CD8-positive, alpha-beta T cell (primary cell): ENCODE measurements at regions of chr16 and their contacts with region 1.

Region 1: DNA sequence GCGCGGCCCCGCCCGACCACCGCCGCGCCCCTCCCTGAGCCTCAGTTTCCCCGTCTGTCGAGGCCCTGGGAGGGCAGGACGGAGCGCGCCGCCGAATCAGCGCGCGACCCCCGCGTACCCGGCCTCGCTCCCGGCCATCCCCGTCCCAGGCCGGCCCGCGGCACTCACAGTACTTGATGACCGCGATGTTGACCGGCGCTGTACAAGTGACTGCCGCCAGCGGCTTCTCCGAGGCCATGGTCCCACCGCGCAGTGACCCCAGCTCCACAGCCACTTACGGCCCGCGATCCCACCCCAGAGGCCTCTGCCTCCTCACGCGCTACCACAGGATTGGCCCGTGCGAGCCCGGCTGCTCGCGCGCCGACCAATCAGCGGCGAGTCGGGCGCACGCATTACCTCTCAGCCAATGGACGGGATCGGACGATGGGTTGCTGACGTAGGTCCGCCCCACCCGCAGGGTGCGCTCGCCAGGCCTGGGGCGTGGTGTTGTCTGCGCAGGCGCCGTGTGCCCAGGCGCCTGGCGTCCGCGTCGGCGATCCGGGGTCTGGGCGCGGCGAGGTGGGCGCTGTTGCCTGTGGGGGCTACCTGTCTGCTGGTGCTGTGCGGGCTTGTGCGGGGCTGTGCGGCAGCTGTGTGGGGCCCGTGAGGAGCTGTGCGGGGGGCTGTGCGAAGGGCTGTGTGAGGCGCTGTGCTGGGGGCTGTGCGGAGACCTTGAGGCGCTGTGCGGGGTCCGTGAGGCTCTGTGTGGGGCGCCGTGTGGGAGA is at the start of gene MVD:
- DNase-seq: peak; percentile 88 to 99 (median 95)
- ATAC-seq: peak; percentile 96
- H3K4me3 ChIP-seq: peak within 1 kb of the TSS; percentile 81 to 85
- H3K4me3 Mint-ChIP-seq: peak within 1 kb of the TSS; percentile 94
- H3K27ac ChIP-seq: peak within 1 kb of the TSS; percentile 84 to 87
- H3K27ac Mint-ChIP-seq: peak within 1 kb of the TSS; percentile 95
- H3K4me1 ChIP-seq: peaks cover 15% of the 10 kb centered on the region
- H3K4me1 Mint-ChIP-seq: peaks cover 20% of the 10 kb centered on the region
- H3K27me3 ChIP-seq: no peaks in the 10 kb centered on the region
- H3K27me3 Mint-ChIP-seq: no peaks in the 10 kb centered on the region
- CTCF ChIP-seq: no peak
- total RNA-seq, gene MVD: 118 to 124 TPM

Region 2: GRCh38 chr16:88619859-88620815 is 42.9 kb before region 1 on chr16:
- CTCF ChIA-PET with region 1: interaction called, 3 read pairs
- POLR2A ChIA-PET with region 1: interaction called, 8 read pairs
- intact Hi-C with region 1: loop called in 1 of 2 experiments (anchors 1 kb)
- DNase-seq: peak; percentile 58 to 97 (median 76)
- ATAC-seq: peak; percentile 85
- H3K4me3 ChIP-seq: no peak overlapping the region
- H3K4me3 Mint-ChIP-seq: peak overlapping the region; percentile 36
- H3K27ac ChIP-seq: peak overlapping the region; percentile 69 to 89
- H3K27ac Mint-ChIP-seq: peak overlapping the region; percentile 99
- H3K4me1 ChIP-seq: peaks cover 28% of the 10 kb centered on the region
- H3K4me1 Mint-ChIP-seq: peaks cover 25% of the 10 kb centered on the region
- H3K27me3 ChIP-seq: no peaks in the 10 kb centered on the region
- H3K27me3 Mint-ChIP-seq: no peaks in the 10 kb centered on the region
- CTCF ChIP-seq: no peak

Region 3: GRCh38 chr16:88650749-88651275 is 12.2 kb before region 1 on chr16 and contains the start of gene CYBA:
- CTCF ChIA-PET with region 1: no interaction called
- POLR2A ChIA-PET with region 1: interaction called, 5 read pairs
- intact Hi-C with region 1: loop called in 1 of 2 experiments (anchors 1 kb)
- DNase-seq: peak; percentile 73 to 92 (median 82)
- ATAC-seq: peak; percentile 80
- H3K4me3 ChIP-seq: peak within 1 kb of the TSS; percentile 90 to 95
- H3K4me3 Mint-ChIP-seq: peak within 1 kb of the TSS; percentile 91
- H3K27ac ChIP-seq: peak within 1 kb of the TSS; percentile 91 to 94
- H3K27ac Mint-ChIP-seq: peak within 1 kb of the TSS; percentile 94
- H3K4me1 ChIP-seq: peaks cover 33% of the 10 kb centered on the region
- H3K4me1 Mint-ChIP-seq: peaks cover 21% of the 10 kb centered on the region
- H3K27me3 ChIP-seq: no peaks in the 10 kb centered on the region
- H3K27me3 Mint-ChIP-seq: no peaks in the 10 kb centered on the region
- CTCF ChIP-seq: no peak
- total RNA-seq, gene CYBA: 312 to 320 TPM

Region 4: DNA sequence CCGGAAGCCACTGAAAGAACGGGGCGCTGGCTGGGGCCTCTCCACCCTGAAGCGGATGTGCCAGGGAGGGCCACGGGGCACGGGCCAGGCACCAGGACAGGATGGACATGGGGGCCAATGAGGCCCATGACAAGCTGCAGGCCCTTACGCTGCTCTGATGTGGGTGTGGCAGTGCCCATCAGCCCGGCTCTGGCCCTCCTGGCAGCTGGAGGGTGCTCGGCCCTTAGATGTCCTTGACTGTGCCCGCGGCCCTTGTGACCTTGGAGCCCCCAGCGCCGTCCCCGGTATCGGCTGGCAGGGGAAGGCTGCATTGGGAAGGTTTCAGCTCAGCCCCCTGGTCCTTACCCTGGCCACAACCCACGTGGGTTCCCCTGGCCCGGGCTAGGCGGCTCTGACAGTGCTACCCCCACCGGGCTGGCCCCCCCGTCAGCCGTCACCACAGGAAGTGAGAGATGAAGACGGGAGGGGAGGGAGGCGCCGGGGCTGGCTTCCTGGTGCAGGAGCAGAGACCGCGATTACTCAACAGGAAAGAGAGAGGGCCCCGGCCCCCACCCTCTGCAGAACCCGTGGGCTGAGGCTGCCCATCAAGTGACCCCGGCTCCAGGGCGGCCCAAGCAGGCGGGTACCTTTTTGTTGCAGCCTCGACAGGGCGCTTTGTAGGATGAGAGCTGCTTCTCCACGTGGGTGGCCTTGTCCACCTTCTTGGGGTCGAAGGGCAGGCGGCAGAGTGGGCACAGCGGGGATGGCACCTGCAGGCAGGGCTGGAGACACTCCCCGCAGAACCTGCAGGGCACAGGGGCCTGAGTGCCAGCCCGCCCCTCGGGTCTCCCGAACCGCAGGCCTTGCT is 37.8 kb after region 1 on chr16:
- CTCF ChIA-PET with region 1: no interaction called
- POLR2A ChIA-PET with region 1: interaction called, 17 read pairs
- intact Hi-C with region 1: loop called (anchors 1 kb)
- DNase-seq: peak; percentile 92 to 98 (median 97)
- ATAC-seq: peak; percentile 65
- H3K4me3 ChIP-seq: peak overlapping the region; percentile 74 to 95
- H3K4me3 Mint-ChIP-seq: peak overlapping the region; percentile 90
- H3K27ac ChIP-seq: peak overlapping the region; percentile 83 to 91
- H3K27ac Mint-ChIP-seq: peak overlapping the region; percentile 98
- H3K4me1 ChIP-seq: peaks cover 56% of the 10 kb centered on the region
- H3K4me1 Mint-ChIP-seq: peaks cover 61% of the 10 kb centered on the region
- H3K27me3 ChIP-seq: no peaks in the 10 kb centered on the region
- H3K27me3 Mint-ChIP-seq: no peaks in the 10 kb centered on the region
- CTCF ChIP-seq: no peak

Region 5: GRCh38 chr16:88706288-88706964 is 43.4 kb after region 1 on chr16 and contains the starts of genes CTU2 and RNF166:
- CTCF ChIA-PET with region 1: no interaction called
- POLR2A ChIA-PET with region 1: interaction called, 17 read pairs
- intact Hi-C with region 1: loop called (anchors 1 kb)
- DNase-seq: peak; percentile 79 to 97 (median 91)
- ATAC-seq: peak; percentile 55
- H3K4me3 ChIP-seq: peak within 1 kb of the TSS; percentile 80 to 89
- H3K4me3 Mint-ChIP-seq: peak within 1 kb of the TSS; percentile 90
- H3K27ac ChIP-seq: peak within 1 kb of the TSS; percentile 88 to 91
- H3K27ac Mint-ChIP-seq: peak within 1 kb of the TSS; percentile 98
- H3K4me1 ChIP-seq: peaks cover 30% of the 10 kb centered on the region
- H3K4me1 Mint-ChIP-seq: peaks cover 44% of the 10 kb centered on the region
- H3K27me3 ChIP-seq: no peaks in the 10 kb centered on the region
- H3K27me3 Mint-ChIP-seq: no peaks in the 10 kb centered on the region
- CTCF ChIP-seq: no peak
- total RNA-seq, gene CTU2: 59.5 to 60.4 TPM
- total RNA-seq, gene RNF166: 371 to 406 TPM

Region 6: DNA sequence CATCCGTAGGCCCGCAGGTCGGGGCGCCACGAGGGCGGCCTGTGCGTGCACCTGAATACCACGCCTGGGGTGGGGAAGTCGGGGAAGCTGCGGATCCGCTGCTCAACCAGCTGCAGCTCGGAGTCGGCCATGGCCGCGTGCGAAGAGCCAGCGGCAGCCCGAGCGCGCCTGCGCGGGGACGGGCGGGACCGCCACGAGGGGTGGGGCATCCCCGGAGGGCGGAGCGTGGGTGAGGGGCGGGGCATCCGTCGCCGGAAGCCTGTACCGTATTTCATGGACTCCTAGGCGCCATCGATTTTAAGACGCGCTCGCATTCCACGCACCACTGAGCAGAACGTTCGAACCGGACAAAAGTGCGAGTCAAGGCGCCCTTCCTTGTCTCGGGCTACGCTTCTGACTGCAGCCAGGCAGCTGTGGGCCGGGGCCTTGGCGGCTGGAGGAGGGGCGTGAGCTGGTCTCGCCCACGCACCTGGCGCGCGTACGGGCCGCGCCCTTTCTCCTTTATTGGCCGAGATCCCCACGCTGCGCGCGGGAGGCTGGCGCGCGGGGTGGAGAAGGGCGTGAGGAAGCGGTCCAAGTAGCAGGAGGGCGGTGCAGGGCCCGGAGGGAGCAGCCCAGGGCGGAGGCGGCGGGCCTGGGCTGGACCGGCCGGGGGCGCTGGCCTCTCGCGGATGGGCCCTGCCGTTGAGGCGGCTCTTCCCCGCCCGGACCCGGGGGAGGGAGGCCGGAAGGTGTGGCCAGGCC is 148.9 kb after region 1 on chr16 and contains the start of gene APRT:
- CTCF ChIA-PET with region 1: no interaction called
- POLR2A ChIA-PET with region 1: no interaction called
- intact Hi-C with region 1: loop called in 1 of 2 experiments (anchors 5 kb)
- DNase-seq: peak; percentile 93 to 99 (median 97)
- ATAC-seq: peak; percentile 90
- H3K4me3 ChIP-seq: peak within 1 kb of the TSS; percentile 75 to 99
- H3K4me3 Mint-ChIP-seq: peak within 1 kb of the TSS; percentile 97
- H3K27ac ChIP-seq: peak within 1 kb of the TSS; percentile 71 to 87
- H3K27ac Mint-ChIP-seq: peak within 1 kb of the TSS; percentile 97
- H3K4me1 ChIP-seq: peaks cover 21% of the 10 kb centered on the region
- H3K4me1 Mint-ChIP-seq: peaks cover 19% of the 10 kb centered on the region
- H3K27me3 ChIP-seq: no peaks in the 10 kb centered on the region
- H3K27me3 Mint-ChIP-seq: no peaks in the 10 kb centered on the region
- CTCF ChIP-seq: no peak
- total RNA-seq, gene APRT: 171 to 178 TPM

Region 7: GRCh38 chr16:88901718-88902337 is 238.8 kb after region 1 on chr16:
- CTCF ChIA-PET with region 1: no interaction called
- POLR2A ChIA-PET with region 1: no interaction called
- intact Hi-C with region 1: no loop called
- DNase-seq: no peak
- ATAC-seq: no peak
- H3K4me3 ChIP-seq: no peak overlapping the region
- H3K4me3 Mint-ChIP-seq: no peak overlapping the region
- H3K27ac ChIP-seq: no peak overlapping the region
- H3K27ac Mint-ChIP-seq: no peak overlapping the region
- H3K4me1 ChIP-seq: no peaks in the 10 kb centered on the region
- H3K4me1 Mint-ChIP-seq: no peaks in the 10 kb centered on the region
- H3K27me3 ChIP-seq: no peaks in the 10 kb centered on the region
- H3K27me3 Mint-ChIP-seq: no peaks in the 10 kb centered on the region
- CTCF ChIP-seq: no peak